ENCODE measurements at regions of chr20 and their contacts with region 1.

Region 1: DNA sequence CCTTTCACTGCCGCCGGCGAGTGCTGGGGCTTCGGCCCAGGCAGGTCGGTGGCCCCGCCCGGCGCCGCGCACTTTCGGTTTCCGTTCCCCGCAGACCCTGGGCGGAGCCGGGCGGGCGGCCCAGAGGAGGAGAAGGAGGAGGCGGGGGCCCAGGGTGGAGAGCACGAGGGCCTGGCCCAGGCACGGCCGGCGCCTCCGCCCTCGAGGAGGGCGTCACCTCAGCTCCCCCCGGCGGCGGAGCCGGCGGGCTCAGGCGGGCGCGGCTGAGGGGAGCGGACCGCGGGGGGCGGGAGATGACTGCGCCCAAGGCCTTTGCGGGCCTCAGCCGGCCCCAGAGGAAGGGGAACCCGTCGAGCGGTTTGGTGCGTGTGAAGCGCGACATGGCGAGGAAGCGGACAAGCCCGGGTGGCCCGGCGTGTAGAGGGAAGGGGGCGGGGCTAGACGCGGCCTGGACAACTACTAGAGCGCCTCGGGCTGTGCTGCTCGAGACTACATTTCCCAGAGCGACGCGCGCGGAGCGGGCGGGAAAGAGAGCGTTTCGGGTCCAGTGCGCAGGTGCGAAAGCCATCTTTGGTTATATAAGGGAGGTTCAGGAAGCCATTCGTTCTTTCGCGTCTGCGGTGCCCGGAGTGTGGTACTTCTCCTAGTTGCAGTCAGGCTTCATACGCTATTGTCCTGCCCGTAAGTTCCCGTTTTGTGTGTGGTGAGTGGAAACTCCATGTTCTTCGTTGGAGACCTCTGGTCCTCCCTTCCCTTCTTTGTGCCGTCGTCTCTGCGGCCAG is at the start of gene ZNFX1:
- DNase-seq: peak; percentile 100
- ATAC-seq: peak; percentile 81
- H3K4me3 Mint-ChIP-seq: peak within 1 kb of the TSS; percentile 100
- H3K27ac Mint-ChIP-seq: peak within 1 kb of the TSS; percentile 100
- H3K4me1 Mint-ChIP-seq: peaks cover 45% of the 10 kb centered on the region
- H3K27me3 Mint-ChIP-seq: peaks cover 2% of the 10 kb centered on the region
- CTCF ChIP-seq: no peak
- total RNA-seq, gene ZNFX1: 27.4 to 27.7 TPM

Region 2: GRCh38 chr20:49186535-49187329 is 91.5 kb before region 1 on chr20:
- CTCF ChIA-PET with region 1: no interaction called
- POLR2A ChIA-PET with region 1: interaction called, 10 read pairs
- intact Hi-C with region 1: no loop called
- DNase-seq: peak; percentile 87
- ATAC-seq: peak; percentile 52
- H3K4me3 Mint-ChIP-seq: peak overlapping the region; percentile 89
- H3K27ac Mint-ChIP-seq: peak overlapping the region; percentile 95
- H3K4me1 Mint-ChIP-seq: peaks cover 45% of the 10 kb centered on the region
- H3K27me3 Mint-ChIP-seq: no peaks in the 10 kb centered on the region
- CTCF ChIP-seq: no peak

Region 3: GRCh38 chr20:49256261-49256660 is 22.0 kb before region 1 on chr20:
- CTCF ChIA-PET with region 1: no interaction called
- POLR2A ChIA-PET with region 1: interaction called, 16 read pairs
- intact Hi-C with region 1: no loop called
- DNase-seq: no peak
- ATAC-seq: no peak
- H3K4me3 Mint-ChIP-seq: no peak overlapping the region
- H3K27ac Mint-ChIP-seq: no peak overlapping the region
- H3K4me1 Mint-ChIP-seq: peaks cover 15% of the 10 kb centered on the region
- H3K27me3 Mint-ChIP-seq: no peaks in the 10 kb centered on the region
- CTCF ChIP-seq: no peak

Region 4: GRCh38 chr20:49320444-49320843 is 42.2 kb after region 1 on chr20:
- CTCF ChIA-PET with region 1: interaction called, 3 read pairs
- POLR2A ChIA-PET with region 1: interaction called, 14 read pairs
- intact Hi-C with region 1: no loop called
- DNase-seq: no peak
- ATAC-seq: no peak
- H3K4me3 Mint-ChIP-seq: no peak overlapping the region
- H3K27ac Mint-ChIP-seq: no peak overlapping the region
- H3K4me1 Mint-ChIP-seq: peaks cover 31% of the 10 kb centered on the region
- H3K27me3 Mint-ChIP-seq: peaks cover 51% of the 10 kb centered on the region
- CTCF ChIP-seq: no peak

Region 5: GRCh38 chr20:49344975-49345374 is 66.7 kb after region 1 on chr20:
- CTCF ChIA-PET with region 1: no interaction called
- POLR2A ChIA-PET with region 1: no interaction called
- intact Hi-C with region 1: no loop called
- DNase-seq: no peak
- ATAC-seq: no peak
- H3K4me3 Mint-ChIP-seq: no peak overlapping the region
- H3K27ac Mint-ChIP-seq: no peak overlapping the region
- H3K4me1 Mint-ChIP-seq: no peaks in the 10 kb centered on the region
- H3K27me3 Mint-ChIP-seq: peaks cover 7% of the 10 kb centered on the region
- CTCF ChIP-seq: no peak

Measured in activated CD8-positive, alpha-beta T cell treated with anti-CD3 and anti-CD28 coated beads for 36 hours (primary cell).